ENCODE measurements at regions of chr19 and their contacts with region 1.

Region 1: DNA sequence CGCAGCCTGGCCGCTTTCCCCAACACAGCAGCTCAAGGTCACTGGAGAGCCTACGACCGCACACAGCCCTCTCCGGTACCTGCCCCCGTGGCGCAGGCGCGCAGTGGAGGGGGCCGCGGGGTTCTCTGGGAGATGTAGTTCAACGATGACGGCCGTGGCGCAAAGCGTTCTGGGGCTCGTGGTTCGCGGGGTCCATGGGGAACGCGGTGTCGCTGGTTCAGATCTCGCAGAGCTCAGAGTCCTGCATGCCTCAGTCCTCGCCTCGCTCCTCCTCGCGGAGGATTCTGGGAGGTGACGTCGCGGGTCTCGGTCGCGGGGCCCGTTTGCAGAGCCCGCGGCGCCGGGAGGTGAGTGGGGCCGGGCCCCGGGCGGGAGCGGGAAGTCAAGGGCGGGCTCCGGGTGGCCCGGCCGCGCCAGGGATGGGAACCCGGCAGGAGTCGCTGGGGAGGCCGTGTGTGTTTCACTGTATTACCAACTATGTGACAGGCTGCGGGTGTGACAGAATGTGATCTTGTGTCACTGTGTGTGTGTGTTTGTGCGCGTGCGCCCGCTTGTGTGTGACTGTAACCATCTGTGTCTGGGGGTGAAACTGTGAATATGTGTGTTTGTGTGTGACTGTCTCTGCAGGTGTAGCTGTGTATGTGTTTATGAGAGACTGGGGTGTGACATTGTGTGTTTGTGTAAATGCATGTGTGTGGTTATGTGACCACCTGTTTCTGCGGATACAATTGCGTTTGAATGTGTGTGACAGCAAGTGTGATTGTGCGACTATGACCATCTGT is at the start of gene ZNF527:
- DNase-seq: peak; percentile 89 to 93 (median 91)
- H3K4me3 ChIP-seq: peak within 1 kb of the TSS; percentile 62 to 79 (median 72)
- H3K4me3 Mint-ChIP-seq: peak within 1 kb of the TSS; percentile 99 to 100
- H3K27ac ChIP-seq: peak within 1 kb of the TSS; percentile 59 to 73
- H3K27ac Mint-ChIP-seq: peak within 1 kb of the TSS; percentile 95 to 98 (median 96)
- H3K4me1 ChIP-seq: peaks cover 8% of the 10 kb centered on the region in 2 donors
- H3K4me1 Mint-ChIP-seq: peaks cover 9% of the 10 kb centered on the region
- H3K27me3 ChIP-seq: no peaks in the 10 kb centered on the region
- H3K27me3 Mint-ChIP-seq: peaks cover 0 to 2% (median 0%) of the 10 kb centered on the region in 3 donors
- CTCF ChIP-seq: no peak
- polyA plus RNA-seq, gene ZNF527: 0.83 to 1.6 (median 1.3) TPM

Region 2: DNA sequence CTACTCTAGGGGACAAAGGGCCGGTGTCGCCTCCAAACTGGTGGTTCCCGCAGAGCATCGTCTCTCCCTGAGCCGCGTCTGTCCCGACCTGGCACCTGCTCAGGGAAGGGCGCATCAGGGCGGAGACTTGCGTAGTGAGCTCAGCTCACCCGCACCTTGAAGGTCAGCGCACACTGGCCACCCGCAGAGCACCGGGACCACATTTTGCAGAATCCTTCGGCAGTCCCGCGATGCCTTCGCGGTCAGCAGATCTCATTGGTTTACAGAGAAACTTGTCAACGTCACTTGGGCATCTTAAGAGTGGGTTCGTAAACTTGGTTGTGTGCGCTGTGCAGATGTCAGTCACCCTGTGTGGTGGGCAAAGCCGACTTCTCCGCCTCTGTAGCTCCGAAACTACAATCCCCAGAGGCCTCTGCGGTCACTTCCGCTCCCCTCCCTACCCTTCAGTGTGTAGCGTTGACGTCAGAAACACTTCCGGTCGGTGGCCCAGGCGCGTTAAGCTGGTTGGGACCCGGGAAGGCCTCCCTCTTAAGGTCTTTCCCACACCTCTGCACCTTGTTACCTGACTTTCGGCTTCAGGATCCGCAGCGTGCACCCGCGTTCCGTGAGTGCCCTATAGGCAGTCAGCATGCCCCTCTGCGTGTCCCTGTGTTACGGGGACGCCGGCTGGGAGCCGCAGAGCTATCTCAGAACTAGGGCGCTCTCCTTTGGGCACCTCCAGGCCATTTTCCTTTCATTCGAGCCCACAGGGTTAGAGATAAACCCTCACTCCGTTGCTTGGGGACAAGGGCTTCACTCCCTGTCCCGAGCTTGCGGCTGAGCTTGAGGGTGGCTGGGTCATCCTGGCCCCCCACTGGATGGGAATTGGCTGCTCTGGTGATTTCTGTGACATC is 36.6 kb before region 1 on chr19:
- intact Hi-C with region 1: loop called in 1 of 2 experiments (anchors 5 kb)
- DNase-seq: peak; percentile 79 to 86 (median 79)
- H3K4me3 ChIP-seq: peak overlapping the region; percentile 53 to 92 (median 64)
- H3K4me3 Mint-ChIP-seq: peak overlapping the region; percentile 85 to 90
- H3K27ac ChIP-seq: peak overlapping the region; percentile 29 to 89
- H3K27ac Mint-ChIP-seq: peak overlapping the region; percentile 77 to 91 (median 89)
- H3K4me1 ChIP-seq: peaks cover 8 to 17% of the 10 kb centered on the region in 2 donors
- H3K4me1 Mint-ChIP-seq: peaks cover 16% of the 10 kb centered on the region
- H3K27me3 ChIP-seq: no peaks in the 10 kb centered on the region
- H3K27me3 Mint-ChIP-seq: peaks cover 0 to 3% (median 0%) of the 10 kb centered on the region in 3 donors
- CTCF ChIP-seq: no peak

Region 3: GRCh38 chr19:37537391-37537947 is 166.4 kb after region 1 on chr19:
- intact Hi-C with region 1: no loop called
- DNase-seq: no peak
- H3K4me3 ChIP-seq: peak overlapping the region in 1 of 3 experiments; percentile 11
- H3K4me3 Mint-ChIP-seq: no peak overlapping the region
- H3K27ac ChIP-seq: no peak overlapping the region
- H3K27ac Mint-ChIP-seq: no peak overlapping the region
- H3K4me1 ChIP-seq: no peaks in the 10 kb centered on the region
- H3K4me1 Mint-ChIP-seq: no peaks in the 10 kb centered on the region
- H3K27me3 ChIP-seq: no peaks in the 10 kb centered on the region
- H3K27me3 Mint-ChIP-seq: no peaks in the 10 kb centered on the region
- CTCF ChIP-seq: no peak

Region 4: DNA sequence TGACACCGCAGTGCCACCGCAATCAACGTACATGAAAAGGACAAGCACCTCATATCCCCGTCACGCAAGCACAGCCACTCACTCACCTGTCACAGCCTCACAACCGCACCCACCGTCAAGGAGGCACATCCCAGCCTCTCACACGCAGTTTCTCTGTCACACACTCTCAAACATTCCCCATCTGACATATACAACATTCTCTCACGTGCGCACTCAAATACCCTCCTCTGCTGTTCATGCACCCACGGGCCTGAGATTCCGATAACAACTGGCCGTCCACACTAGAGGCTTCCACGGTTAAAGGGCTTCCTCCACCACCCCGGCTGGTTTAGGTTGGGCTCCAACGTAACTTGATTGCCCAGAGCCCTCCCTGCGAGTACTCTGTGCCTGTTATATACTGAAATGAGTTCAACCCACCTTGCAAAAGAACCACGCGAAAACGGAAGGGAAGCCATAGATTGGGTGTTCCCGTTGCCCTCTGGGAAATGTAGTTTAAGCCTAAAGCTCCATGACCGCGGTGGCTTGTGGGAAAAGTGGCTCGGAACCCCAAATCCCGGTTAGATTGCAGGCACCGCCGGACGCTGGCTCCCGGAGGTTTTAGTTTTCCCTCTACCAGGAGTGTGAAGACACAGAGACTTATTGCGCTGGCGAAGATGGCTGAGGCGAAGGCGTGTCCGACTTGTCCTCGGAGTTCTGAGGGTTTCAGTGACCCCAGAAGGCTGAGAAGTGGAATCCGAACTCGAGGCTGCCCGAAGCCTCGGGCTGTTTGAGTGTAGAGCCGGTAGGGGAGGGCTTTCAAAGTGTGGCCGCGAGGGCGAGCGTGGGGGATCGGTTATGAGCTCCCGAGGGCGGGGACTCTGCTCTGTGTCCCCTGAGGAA is 408.3 kb after region 1 on chr19 and contains the start of gene ZNF573:
- intact Hi-C with region 1: loop called in 1 of 2 experiments (anchors 5 kb)
- DNase-seq: peak; percentile 59 to 76 (median 67)
- H3K4me3 ChIP-seq: peak within 1 kb of the TSS; percentile 69 to 99 (median 90)
- H3K4me3 Mint-ChIP-seq: peak within 1 kb of the TSS; percentile 89 to 98
- H3K27ac ChIP-seq: peak within 1 kb of the TSS; percentile 36 to 82
- H3K27ac Mint-ChIP-seq: peak within 1 kb of the TSS; percentile 76 to 92 (median 90)
- H3K4me1 ChIP-seq: peaks cover 9 to 16% of the 10 kb centered on the region in 2 donors
- H3K4me1 Mint-ChIP-seq: peaks cover 17% of the 10 kb centered on the region
- H3K27me3 ChIP-seq: no peaks in the 10 kb centered on the region
- H3K27me3 Mint-ChIP-seq: peaks cover 0 to 3% (median 1%) of the 10 kb centered on the region in 3 donors
- CTCF ChIP-seq: no peak
- polyA plus RNA-seq, gene ZNF573: 1.1 to 3.1 (median 1.5) TPM

Measured in CD14-positive monocyte (primary cell).